ENCODE measurements at regions of chr22 and their contacts with region 1.

Region 1: GRCh38 chr22:40583053-40583741 is 53.3 kb downstream of the MRTFA start:
- DNase-seq: peak; percentile 58
- H3K4me3 Mint-ChIP-seq: peak overlapping the region; percentile 33
- H3K27ac Mint-ChIP-seq: peak overlapping the region; percentile 80
- H3K4me1 Mint-ChIP-seq: peaks cover 35% of the 10 kb centered on the region
- H3K27me3 Mint-ChIP-seq: no peaks in the 10 kb centered on the region

Region 2: DNA sequence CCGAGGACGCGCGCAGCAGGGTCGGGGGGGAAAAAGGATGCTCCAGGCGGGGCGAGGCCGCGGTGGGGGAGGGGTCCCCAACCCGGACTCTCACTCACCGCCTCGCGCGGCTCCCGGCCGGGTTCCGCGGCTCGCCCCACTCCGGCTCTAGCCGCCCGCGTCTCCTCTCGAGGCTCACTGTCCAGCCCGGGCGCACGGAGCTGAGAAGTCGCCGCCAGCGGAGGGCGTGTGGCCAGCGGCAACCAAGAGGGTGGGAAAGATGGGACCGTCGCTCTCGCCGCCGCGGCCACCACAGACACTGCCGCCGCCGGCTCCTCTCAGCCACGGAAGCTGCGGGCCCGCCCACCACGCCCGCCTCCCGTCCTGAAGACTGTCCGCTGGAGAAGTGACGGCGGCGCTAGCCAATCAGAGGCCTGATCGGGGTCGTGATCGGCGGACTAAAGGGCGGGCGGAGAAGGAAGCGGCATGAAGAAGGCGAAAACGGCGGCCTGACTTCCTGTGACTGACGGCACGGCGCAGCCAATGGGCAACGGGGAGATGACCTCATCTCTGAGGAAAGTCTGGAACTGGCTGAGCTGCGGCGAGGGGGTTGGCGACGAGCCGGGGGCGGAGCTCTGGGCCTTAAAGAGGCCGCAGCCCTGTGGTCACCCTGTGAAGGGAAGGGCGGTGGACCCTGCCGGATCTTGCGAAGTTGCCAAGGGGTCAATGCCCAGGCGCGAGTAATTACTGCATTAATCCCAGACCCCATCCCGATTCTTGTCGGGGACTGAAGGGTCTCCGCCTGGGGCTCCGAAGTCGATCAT is 53.4 kb after region 1 on chr22 and contains the start of gene MRTFA:
- intact Hi-C with region 1: loop called (anchors 2 kb)
- DNase-seq: peak; percentile 100
- H3K4me3 Mint-ChIP-seq: peak within 1 kb of the TSS; percentile 91
- H3K27ac Mint-ChIP-seq: peak within 1 kb of the TSS; percentile 95
- H3K4me1 Mint-ChIP-seq: peaks cover 32% of the 10 kb centered on the region
- H3K27me3 Mint-ChIP-seq: no peaks in the 10 kb centered on the region
- total RNA-seq, gene MRTFA: 51.7 and 51.9 TPM in 2 replicates

Region 3: DNA sequence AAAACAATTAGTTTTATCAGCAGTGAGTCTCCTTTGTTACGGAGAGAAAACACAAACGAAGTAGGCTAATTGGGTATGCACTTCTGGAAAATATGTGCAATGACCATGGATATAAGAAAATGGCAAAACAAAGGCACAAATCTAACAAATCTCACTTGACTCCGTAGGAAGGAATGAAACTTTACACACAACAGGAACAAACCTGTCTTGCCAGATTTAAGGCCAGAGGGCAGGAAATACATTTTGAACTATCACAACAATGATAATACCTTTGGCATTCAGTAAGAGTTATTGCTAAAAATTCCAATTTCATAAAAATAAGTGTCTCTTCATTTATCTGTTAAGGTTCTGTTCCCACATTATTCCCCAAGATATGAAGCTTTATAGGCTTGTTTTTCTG is 199.3 kb after region 1 on chr22:
- intact Hi-C with region 1: no loop called
- DNase-seq: no peak
- H3K4me3 Mint-ChIP-seq: no peak overlapping the region
- H3K27ac Mint-ChIP-seq: no peak overlapping the region
- H3K4me1 Mint-ChIP-seq: no peaks in the 10 kb centered on the region
- H3K27me3 Mint-ChIP-seq: no peaks in the 10 kb centered on the region

Measured in activated CD4-positive, alpha-beta T cell treated with anti-CD3 and anti-CD28 coated beads, Interleukin-2, amount 10 ng/mL, durations not matched to agents 24 days and 14 days (primary cell).